ENCODE measurements at regions of chr5 and their contacts with region 1.

Region 1: DNA sequence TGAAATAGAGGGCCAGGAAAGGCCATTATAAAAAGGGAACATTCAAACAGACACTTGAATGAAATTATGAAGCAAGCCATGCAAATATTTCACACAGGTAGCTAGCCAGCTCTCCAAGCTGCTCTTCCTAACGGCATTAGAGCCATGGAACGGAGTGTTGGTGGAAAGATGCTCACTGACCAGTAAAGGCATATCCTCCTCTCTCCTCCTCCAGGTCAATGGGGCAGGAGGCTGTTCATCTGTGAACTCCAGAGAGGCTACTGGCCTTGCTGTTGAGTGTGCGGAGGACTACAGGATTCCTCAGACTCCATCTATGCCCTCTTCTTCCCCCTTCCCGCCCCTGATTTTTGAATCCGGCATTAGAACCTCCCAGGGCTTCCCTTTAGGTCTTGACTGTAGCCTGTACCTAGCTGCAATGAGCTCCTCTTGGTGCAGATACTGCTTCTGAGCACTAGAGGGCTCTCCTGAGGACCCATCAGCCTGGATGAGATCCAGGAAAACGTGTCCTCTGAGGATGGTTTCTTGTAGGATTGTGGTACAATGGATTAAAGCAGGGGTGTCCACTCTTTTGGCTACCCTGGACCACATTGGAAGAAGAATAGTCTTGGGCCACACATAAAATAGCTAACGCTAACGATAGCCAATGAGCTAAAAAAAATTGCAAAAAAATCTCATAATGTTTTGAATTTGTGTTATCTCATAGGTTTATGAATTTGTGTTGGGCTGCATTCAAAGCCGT is 162.2 kb downstream of the SREK1 start:
- DNase-seq: peak; percentile 59
- ATAC-seq: peak; percentile 95
- H3K4me3 Mint-ChIP-seq: no peak overlapping the region
- H3K27ac Mint-ChIP-seq: no peak overlapping the region
- H3K4me1 Mint-ChIP-seq: 0 out of 2 replicates have a peak, but pooled peaks cover 3% of the 10 kb centered on the region
- H3K27me3 Mint-ChIP-seq: peaks cover 3% of the 10 kb centered on the region; the same call in 1 of the 2 replicates
- CTCF ChIP-seq: peak; percentile 71

Region 2: GRCh38 chr5:66324357-66324756 is 18.1 kb after region 1 on chr5:
- CTCF ChIA-PET with region 1: interaction called, 18 read pairs
- POLR2A ChIA-PET with region 1: no interaction called
- DNase-seq: no peak
- ATAC-seq: no peak
- H3K4me3 Mint-ChIP-seq: no peak overlapping the region
- H3K27ac Mint-ChIP-seq: no peak overlapping the region
- H3K4me1 Mint-ChIP-seq: no peaks in the 10 kb centered on the region
- H3K27me3 Mint-ChIP-seq: no peaks in the 10 kb centered on the region
- CTCF ChIP-seq: no peak

Region 3: GRCh38 chr5:66343370-66344071 is 37.2 kb after region 1 on chr5:
- CTCF ChIA-PET with region 1: interaction called, 11 read pairs
- POLR2A ChIA-PET with region 1: no interaction called
- DNase-seq: no peak
- ATAC-seq: no peak
- H3K4me3 Mint-ChIP-seq: no peak overlapping the region
- H3K27ac Mint-ChIP-seq: no peak overlapping the region
- H3K4me1 Mint-ChIP-seq: no peaks in the 10 kb centered on the region
- H3K27me3 Mint-ChIP-seq: no peaks in the 10 kb centered on the region; the same call in 1 of the 2 replicates
- CTCF ChIP-seq: no peak

Region 4: DNA sequence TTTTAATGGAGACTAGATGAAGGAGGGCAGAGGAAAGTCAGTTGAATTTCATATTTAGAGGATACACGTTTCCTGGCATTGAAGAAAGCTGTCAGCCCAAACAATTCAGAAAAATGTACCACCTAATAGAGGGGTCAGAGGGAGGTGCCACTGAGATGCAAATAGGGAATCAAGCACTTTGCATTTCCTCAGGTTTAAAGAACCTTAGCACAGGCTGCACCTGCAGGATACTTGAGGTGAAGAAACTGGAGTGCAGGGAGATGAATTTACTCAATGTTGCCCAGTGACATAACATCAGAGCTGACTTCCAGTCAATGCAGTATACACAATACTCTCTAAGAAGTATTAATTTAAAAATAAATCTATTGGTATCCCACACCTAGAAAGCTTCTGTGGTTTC is 222.9 kb after region 1 on chr5:
- CTCF ChIA-PET with region 1: interaction called, 18 read pairs
- POLR2A ChIA-PET with region 1: no interaction called
- DNase-seq: peak; percentile 51
- ATAC-seq: peak; percentile 97
- H3K4me3 Mint-ChIP-seq: no peak overlapping the region
- H3K27ac Mint-ChIP-seq: no peak overlapping the region
- H3K4me1 Mint-ChIP-seq: peaks cover 9% of the 10 kb centered on the region; the same call in 1 of the 2 replicates
- H3K27me3 Mint-ChIP-seq: no peaks in the 10 kb centered on the region
- CTCF ChIP-seq: no peak

Region 5: GRCh38 chr5:66542711-66543110 is 236.4 kb after region 1 on chr5:
- CTCF ChIA-PET with region 1: no interaction called
- POLR2A ChIA-PET with region 1: no interaction called
- DNase-seq: no peak
- ATAC-seq: no peak
- H3K4me3 Mint-ChIP-seq: no peak overlapping the region
- H3K27ac Mint-ChIP-seq: no peak overlapping the region
- H3K4me1 Mint-ChIP-seq: no peaks in the 10 kb centered on the region
- H3K27me3 Mint-ChIP-seq: no peaks in the 10 kb centered on the region
- CTCF ChIP-seq: no peak

Region 6: GRCh38 chr5:66757188-66757833 is 451.0 kb after region 1 on chr5:
- CTCF ChIA-PET with region 1: interaction called, 34 read pairs
- POLR2A ChIA-PET with region 1: no interaction called
- DNase-seq: peak; percentile 11
- ATAC-seq: no peak
- H3K4me3 Mint-ChIP-seq: no peak overlapping the region
- H3K27ac Mint-ChIP-seq: no peak overlapping the region
- H3K4me1 Mint-ChIP-seq: no peaks in the 10 kb centered on the region
- H3K27me3 Mint-ChIP-seq: no peaks in the 10 kb centered on the region; the same call in 1 of the 2 replicates
- CTCF ChIP-seq: 0 out of 2 replicates have a peak, but pooled peaks have one; percentile 19

Region 7: DNA sequence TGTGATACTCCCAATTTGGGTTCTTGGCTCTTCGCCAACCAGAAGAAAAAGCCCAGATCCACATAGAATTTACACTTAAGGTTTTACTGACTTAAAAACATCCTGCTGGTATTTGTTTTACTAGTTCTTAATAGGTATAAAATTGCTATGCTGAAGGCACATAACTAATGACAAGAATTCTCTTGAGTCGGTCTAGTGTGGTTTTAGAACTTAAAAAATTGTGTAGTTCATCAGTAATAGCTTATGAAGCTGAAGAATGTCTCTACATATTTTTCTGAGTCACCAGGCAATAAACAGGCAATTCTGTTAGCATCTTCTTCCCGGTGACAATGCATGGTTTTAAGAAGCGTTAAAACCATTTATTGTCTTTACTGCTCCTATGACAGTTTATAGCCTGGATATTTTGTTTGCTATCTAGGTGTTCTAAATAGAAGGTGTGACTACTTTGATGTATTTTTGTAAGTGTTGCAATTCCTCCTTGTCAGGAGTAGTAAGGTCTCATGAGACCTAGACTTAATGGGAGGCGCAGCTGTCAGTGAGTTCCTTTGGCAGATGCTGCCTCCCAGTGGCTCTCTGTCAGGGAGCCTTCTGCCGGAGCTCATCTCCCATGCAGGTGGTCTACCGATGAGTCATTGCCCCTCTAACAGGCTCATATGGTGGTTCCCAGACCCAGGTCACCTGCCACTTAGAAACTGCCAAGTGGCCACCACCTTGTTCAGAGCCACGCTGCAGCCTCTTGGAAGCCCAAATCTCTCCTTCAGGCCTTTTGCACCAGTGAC is 463.8 kb after region 1 on chr5:
- CTCF ChIA-PET with region 1: interaction called, 20 read pairs
- POLR2A ChIA-PET with region 1: no interaction called
- DNase-seq: peak; percentile 70
- ATAC-seq: peak; percentile 96
- H3K4me3 Mint-ChIP-seq: no peak overlapping the region
- H3K27ac Mint-ChIP-seq: no peak overlapping the region
- H3K4me1 Mint-ChIP-seq: no peaks in the 10 kb centered on the region
- H3K27me3 Mint-ChIP-seq: no peaks in the 10 kb centered on the region; the same call in 1 of the 2 replicates
- CTCF ChIP-seq: no peak